ENCODE measurements at regions of chr11 and their contacts with region 1.

Region 1: DNA sequence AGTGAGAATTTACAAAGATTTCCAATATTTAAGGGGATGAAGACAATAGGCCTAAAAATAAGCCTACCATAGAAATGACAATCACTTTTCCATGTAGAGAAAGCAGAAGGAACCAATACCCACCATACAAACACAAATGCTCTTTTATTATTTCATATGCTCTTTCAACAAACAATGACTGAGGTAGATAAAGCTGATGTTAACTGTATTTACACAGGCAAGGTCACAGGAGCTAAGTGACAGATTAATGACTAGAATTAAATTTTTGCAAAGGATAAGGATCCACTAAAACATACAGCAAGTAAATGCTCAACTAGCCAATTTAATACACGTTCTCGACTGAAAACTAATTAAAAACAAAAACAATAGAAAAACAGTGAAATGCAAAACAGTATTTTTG is 34.2 kb downstream of the PICALM start:
- H3K4me3 Mint-ChIP-seq: no peak overlapping the region
- H3K27ac Mint-ChIP-seq: no peak overlapping the region
- H3K4me1 Mint-ChIP-seq: peaks cover 40% of the 10 kb centered on the region
- H3K27me3 Mint-ChIP-seq: no peaks in the 10 kb centered on the region

Region 2: DNA sequence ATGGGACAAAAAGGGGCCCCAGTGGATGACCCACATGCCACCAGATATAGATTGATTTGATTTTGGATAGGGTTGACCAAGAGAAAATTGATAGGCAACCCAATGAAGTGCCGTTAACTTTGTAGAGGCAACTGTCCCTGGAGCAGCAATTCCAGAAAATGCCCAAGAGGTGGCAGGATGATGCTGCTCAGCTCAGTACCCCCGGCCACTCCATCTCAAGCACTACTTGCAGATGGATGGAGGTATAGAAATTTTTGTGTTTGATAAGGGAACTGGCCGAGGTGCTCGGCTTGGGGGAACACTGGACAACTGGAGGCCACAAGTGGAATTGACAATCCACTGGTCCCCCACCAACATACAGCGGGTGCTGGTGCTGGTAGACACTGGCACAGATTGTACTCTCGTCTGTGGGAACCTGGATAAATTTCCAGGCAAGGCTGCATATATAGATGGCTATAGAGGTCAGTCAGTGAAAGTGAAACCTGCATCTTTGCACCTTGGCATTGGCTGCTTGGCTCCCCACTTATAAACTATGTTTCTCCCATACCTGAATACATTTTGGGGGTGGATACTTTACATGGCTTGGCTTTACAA is 93.2 kb before region 1 on chr11:
- intact Hi-C with region 1: no loop called
- H3K4me3 Mint-ChIP-seq: no peak overlapping the region
- H3K27ac Mint-ChIP-seq: no peak overlapping the region
- H3K4me1 Mint-ChIP-seq: peaks cover 14% of the 10 kb centered on the region
- H3K27me3 Mint-ChIP-seq: no peaks in the 10 kb centered on the region

Region 3: GRCh38 chr11:85988780-85989179 is 45.9 kb before region 1 on chr11:
- intact Hi-C with region 1: loop called (anchors 5 kb)
- H3K4me3 Mint-ChIP-seq: no peak overlapping the region
- H3K27ac Mint-ChIP-seq: peak overlapping the region; percentile 79
- H3K4me1 Mint-ChIP-seq: peaks cover 35% of the 10 kb centered on the region
- H3K27me3 Mint-ChIP-seq: no peaks in the 10 kb centered on the region

Measured in dendritic cell treated with granulocyte-macrophage colony-stimulating factor and Interleukin-4, amounts not matched to agents 40 ng/mL and 50 ng/mL, for 4 days (primary cell).